ENCODE measurements at regions of chr16 and their contacts with region 1.

Region 1: GRCh38 chr16:86563489-86564345 is 2.9 kb upstream of the FOXC2 start:
- DNase-seq: peak; percentile 92
- ATAC-seq: peak; percentile 88
- H3K4me3 Mint-ChIP-seq: no peak overlapping the region
- H3K27ac Mint-ChIP-seq: no peak overlapping the region
- H3K4me1 Mint-ChIP-seq: peaks cover 9% of the 10 kb centered on the region
- H3K27me3 Mint-ChIP-seq: peaks cover 47% of the 10 kb centered on the region

Region 2: GRCh38 chr16:86874141-86874540 is 310.4 kb after region 1 on chr16:
- CTCF ChIA-PET with region 1: interaction called, 18 read pairs
- DNase-seq: peak; percentile 46
- ATAC-seq: no peak
- H3K4me3 Mint-ChIP-seq: no peak overlapping the region
- H3K27ac Mint-ChIP-seq: no peak overlapping the region
- H3K4me1 Mint-ChIP-seq: no peaks in the 10 kb centered on the region
- H3K27me3 Mint-ChIP-seq: peaks cover 22% of the 10 kb centered on the region

Region 3: DNA sequence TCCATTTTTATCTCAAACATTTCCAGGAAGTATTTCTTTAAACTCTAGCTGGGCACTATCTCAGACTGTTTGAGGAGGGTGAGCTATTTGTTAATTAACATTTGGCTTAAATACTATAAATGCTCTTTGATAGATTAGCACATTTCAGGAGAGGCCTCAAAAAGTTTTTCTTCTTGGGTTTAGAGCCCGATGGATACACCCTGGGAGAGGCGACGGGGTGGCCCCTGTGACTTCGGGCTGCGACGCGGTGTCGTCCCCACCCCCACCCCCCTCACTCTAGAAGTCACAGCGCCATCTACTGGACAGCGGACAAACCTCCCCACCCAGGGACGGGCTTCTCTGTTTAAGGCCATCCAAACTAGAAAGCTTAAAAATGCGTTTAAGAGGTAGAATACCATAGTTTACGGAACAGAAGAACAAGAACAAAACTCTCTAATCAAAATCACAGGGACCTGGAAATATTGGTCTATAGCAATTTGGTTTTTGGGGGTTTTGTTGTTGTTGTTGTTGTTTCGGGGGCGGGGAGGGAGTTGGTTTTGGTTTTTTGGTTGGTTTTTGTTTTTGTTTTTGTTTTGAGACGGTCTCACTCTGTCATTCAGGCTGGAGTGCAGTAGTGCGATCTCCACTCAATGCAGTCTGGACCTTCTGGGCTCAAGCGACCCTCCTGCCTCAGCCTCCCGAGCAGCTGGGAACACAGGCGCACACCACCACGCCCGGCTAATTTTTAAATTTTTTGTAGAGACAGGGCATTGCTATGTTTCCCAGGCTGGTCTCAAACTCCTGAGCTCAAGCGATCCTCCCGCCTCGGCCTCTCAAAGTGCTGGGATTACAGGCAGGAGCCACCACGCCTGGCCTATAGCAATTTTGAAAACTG is 499.1 kb after region 1 on chr16:
- CTCF ChIA-PET with region 1: interaction called, 22 read pairs
- DNase-seq: peak; percentile 68
- ATAC-seq: peak; percentile 33
- H3K4me3 Mint-ChIP-seq: no peak overlapping the region
- H3K27ac Mint-ChIP-seq: no peak overlapping the region
- H3K4me1 Mint-ChIP-seq: no peaks in the 10 kb centered on the region
- H3K27me3 Mint-ChIP-seq: peaks cover 43% of the 10 kb centered on the region

Measured in activated CD8-positive, alpha-beta memory T cell treated with anti-CD3 and anti-CD28 coated beads, Interleukin-2, amount 10 ng/mL, durations not matched to agents 7 days and 5 days (primary cell).